PC-9 (cell line): ENCODE measurements at regions of chr7 and their contacts with region 1.

Region 1: GRCh38 chr7:92761391-92762097 is 74.8 kb downstream of the CDK6 start:
- DNase-seq: no peak
- H3K4me3 ChIP-seq: no peak overlapping the region
- H3K27ac ChIP-seq: no peak overlapping the region
- H3K4me1 ChIP-seq: peaks cover 44% of the 10 kb centered on the region
- H3K27me3 ChIP-seq: no peaks in the 10 kb centered on the region
- CTCF ChIP-seq: no peak

Region 2: GRCh38 chr7:93530701-93531100 is 769.2 kb after region 1 on chr7:
- CTCF ChIA-PET with region 1: no interaction called
- POLR2A ChIA-PET with region 1: interaction called, 10 read pairs
- intact Hi-C with region 1: no loop called
- DNase-seq: no peak
- H3K4me3 ChIP-seq: no peak overlapping the region
- H3K27ac ChIP-seq: no peak overlapping the region
- H3K4me1 ChIP-seq: no peaks in the 10 kb centered on the region
- H3K27me3 ChIP-seq: no peaks in the 10 kb centered on the region
- CTCF ChIP-seq: no peak